Endothelial cell of umbilical vein (primary cell): ENCODE measurements at regions of chr2 and their contacts with region 1.

Region 1: DNA sequence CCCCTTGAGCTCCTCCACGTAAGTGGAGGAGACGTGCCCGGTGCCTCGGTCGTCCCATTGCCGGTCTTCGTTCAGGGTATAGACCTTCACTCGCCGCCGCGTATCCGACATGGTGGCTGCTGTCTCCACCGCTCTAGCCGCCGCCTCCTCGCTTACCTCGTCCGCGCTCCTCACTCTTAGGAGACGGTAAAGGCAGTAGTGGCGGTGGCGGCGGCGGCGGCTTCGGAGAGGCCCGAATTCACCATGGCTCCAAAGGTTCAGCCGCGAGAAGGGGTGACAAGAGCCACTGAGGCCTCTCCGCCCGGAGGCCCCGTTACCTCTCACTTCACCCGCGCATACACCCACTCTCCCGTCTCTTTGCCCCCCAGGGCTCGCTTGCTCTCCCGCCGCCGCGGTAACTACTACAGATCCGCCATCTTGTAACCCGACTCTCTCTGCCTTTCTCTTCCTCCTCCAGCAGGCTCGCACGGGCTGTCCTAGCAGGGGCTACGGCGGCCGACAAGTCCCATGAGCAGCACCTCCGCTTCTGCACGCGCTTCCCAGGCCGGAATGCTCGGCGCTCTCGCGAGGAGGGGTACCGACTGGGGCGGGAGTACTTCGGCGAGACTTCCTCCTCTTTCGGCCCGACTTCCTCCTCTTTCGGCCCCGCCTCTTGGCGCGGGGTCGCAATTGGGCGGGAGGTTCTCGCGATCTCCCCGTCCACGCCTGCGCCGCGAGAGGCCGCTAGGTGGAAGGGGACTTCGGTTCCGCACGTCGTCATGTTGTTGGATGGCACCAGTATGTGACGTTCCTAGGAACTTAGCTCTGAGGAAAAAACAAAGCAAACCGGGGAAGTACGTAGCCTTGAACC is at the start of gene PPP4R3B:
- DNase-seq: peak; percentile 100
- H3K4me3 ChIP-seq: peak within 1 kb of the TSS; percentile 64 to 98 (median 97)
- H3K27ac ChIP-seq: peak within 1 kb of the TSS; percentile 87
- H3K4me1 ChIP-seq: peaks cover 24% of the 10 kb centered on the region
- H3K27me3 ChIP-seq: no peaks in the 10 kb centered on the region
- CTCF ChIP-seq: peak; percentile 26 to 52
- POLR2A ChIP-seq: peak; percentile 59
- total RNA-seq, gene PPP4R3B: 49.0 and 51.5 TPM in 2 replicates

Region 2: DNA sequence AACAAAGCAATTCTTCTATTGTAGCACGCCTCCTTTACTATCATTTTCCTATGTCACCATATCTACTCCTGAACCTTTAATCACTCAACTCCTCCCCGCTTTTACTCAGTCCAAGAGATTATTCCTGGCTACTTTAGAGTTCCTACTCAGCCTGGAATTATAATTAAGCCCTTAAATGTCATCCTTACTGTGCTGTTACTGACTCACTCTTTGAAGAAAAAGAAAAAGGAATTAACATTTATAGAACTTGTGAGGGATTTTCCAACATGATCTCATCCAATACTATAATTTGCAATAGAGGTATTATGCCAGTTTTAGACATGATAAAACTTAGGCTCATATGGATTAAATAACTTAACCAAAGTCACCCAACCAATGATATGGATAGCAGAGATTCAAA is 259.5 kb before region 1 on chr2:
- CTCF ChIA-PET with region 1: no interaction called
- POLR2A ChIA-PET with region 1: no interaction called
- dilution Hi-C with region 1: no loop called
- intact Hi-C with region 1: no loop called
- DNase-seq: no peak
- H3K4me3 ChIP-seq: no peak overlapping the region
- H3K27ac ChIP-seq: no peak overlapping the region
- H3K4me1 ChIP-seq: no peaks in the 10 kb centered on the region
- H3K27me3 ChIP-seq: no peaks in the 10 kb centered on the region
- CTCF ChIP-seq: no peak
- POLR2A ChIP-seq: no peak

Region 3: DNA sequence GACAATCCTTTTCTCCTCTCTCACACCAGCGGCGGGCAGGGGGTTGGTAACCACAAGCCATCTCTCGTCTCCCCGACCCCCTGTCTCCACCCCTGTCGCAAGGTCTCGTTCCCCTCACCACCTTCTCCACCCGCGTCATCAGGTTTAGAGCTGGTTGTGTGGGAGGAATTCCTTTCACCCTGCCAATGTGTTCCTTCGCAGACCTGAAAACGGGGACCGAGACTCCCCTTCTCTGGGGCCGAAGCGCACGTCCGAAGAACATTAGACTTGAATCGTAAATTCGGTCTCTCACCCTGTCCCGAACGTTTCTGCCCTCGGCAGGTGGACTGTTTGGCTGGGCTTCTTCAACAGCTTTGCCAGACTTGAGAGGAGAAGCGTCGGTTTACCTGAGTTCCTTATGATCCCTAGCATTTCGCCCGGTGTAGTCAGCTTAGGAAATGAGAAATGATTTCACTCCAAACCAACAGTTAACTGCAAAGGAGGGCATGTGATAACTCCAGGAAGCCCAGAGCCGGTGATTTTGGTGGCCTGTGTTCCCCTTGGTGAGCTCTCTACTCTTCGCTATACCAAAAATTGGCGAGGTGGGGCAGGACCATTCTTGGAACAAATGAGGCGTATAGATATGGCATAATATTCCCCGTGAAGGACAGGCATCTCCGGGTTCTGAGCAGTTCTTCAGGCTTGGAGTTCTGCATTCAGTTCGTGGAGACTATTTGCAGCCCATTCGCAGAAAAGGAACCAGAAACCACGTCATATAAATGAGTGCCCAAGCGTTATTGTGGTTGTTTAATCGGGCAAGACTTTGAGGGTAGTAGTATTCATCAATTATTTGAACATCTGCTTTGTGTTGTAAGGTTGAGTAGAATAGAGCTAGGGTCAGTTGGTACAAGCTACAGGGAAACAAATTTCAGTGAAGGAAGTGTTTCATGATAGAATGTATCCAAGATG is 97.2 kb before region 1 on chr2:
- CTCF ChIA-PET with region 1: interaction called, 3 read pairs
- POLR2A ChIA-PET with region 1: no interaction called
- dilution Hi-C with region 1: no loop called
- intact Hi-C with region 1: loop called (anchors 1 kb)
- DNase-seq: peak; percentile 55
- H3K4me3 ChIP-seq: peak overlapping the region; percentile 61 to 91 (median 63)
- H3K27ac ChIP-seq: peak overlapping the region; percentile 21
- H3K4me1 ChIP-seq: peaks cover 4% of the 10 kb centered on the region
- H3K27me3 ChIP-seq: no peaks in the 10 kb centered on the region
- CTCF ChIP-seq: no peak
- POLR2A ChIP-seq: no peak

Region 4: DNA sequence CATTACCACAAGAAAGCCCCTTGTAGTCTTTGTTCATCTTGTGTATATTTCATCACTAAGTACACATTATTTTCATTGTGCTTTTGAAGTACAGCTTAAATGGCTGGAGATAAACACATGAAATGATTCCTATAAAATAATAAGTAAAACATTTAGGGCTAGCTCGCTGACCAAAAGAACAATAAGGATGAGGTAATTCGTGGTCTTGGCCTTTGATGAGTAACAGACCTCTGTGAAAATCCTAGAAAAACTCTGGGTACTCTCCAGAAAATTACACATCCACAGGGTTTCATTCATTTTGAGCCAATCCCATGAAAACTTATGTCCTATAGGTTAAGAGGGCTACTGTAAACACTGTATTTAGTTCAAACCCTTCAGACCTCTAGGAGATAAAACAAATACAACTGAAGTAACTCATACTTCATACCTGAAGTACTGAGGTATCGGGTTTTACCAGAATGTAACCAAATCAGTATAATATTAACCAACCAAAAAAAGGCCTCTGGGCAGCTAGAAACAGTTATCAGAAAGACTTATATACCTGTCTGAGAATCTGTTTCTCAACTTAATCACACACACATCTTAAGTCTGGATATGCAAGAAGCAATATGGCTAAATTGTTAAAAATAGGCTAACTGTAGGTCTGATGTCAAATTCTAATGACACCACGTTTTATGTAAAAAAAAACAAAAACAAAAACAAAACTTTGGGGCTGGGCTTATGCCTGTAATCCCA is 66.9 kb before region 1 on chr2:
- CTCF ChIA-PET with region 1: no interaction called
- POLR2A ChIA-PET with region 1: no interaction called
- dilution Hi-C with region 1: no loop called
- intact Hi-C with region 1: loop called (anchors 1 kb)
- DNase-seq: peak; percentile 84
- H3K4me3 ChIP-seq: no peak overlapping the region
- H3K27ac ChIP-seq: peak overlapping the region; percentile 75
- H3K4me1 ChIP-seq: peaks cover 13% of the 10 kb centered on the region
- H3K27me3 ChIP-seq: no peaks in the 10 kb centered on the region
- CTCF ChIP-seq: no peak
- POLR2A ChIP-seq: no peak

Region 5: DNA sequence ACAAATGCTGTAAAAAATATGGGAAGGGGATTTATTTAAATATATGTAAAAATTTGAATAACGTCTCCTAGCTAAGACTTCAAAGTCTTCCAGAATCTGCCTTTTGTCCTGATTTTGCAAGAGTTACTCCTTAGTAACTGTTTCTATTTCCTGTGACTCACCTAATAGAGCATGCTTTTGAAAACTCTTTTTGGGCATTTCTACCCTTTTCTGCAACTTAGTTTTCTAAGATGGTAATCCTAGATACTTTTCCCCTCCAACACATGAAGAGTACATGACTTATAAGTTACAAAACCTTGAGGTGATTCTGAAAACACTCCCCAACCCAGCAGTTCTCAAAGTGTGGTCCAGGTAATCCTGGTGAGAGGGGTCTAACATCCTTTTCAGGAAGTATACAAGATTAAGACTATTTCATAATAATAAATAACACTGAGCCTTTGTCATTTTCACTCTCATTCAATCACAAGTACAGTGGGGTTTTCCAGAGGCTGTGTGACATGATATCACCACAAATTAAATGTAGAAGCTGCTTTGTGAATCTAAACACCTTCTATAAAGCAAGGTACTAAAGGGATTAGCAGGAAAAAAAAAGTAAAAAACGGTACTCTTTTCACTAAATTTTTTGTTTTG is 31.8 kb before region 1 on chr2:
- CTCF ChIA-PET with region 1: interaction called, 3 read pairs
- POLR2A ChIA-PET with region 1: no interaction called
- dilution Hi-C with region 1: no loop called
- intact Hi-C with region 1: loop called (anchors 2 kb)
- DNase-seq: peak; percentile 53
- H3K4me3 ChIP-seq: peak overlapping the region in 1 of 3 experiments; percentile 8
- H3K27ac ChIP-seq: peak overlapping the region; percentile 85
- H3K4me1 ChIP-seq: peaks cover 21% of the 10 kb centered on the region
- H3K27me3 ChIP-seq: no peaks in the 10 kb centered on the region
- CTCF ChIP-seq: no peak
- POLR2A ChIP-seq: no peak

Region 6: DNA sequence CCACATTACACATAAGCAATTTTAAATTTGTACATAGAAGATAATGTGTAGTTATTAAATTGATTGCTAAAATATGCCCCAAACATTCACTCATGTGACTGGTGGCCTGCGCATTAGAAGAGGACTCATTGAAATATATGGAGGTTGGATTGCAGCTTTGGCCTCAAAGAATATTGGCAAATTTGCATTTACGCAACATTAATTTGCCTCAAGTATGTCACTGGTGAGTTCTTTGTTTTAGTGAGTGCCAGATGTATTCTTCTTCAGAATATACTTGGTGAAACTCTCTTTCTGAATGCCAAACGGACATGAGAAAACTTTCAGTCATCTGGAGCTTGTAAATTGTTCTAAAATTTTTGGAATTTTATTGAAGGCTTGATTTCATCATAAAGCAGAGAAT is 312.1 kb after region 1 on chr2:
- CTCF ChIA-PET with region 1: no interaction called
- POLR2A ChIA-PET with region 1: no interaction called
- dilution Hi-C with region 1: no loop called
- intact Hi-C with region 1: no loop called
- DNase-seq: no peak
- H3K4me3 ChIP-seq: no peak overlapping the region
- H3K27ac ChIP-seq: no peak overlapping the region
- H3K4me1 ChIP-seq: peaks cover 5% of the 10 kb centered on the region
- H3K27me3 ChIP-seq: no peaks in the 10 kb centered on the region
- CTCF ChIP-seq: no peak
- POLR2A ChIP-seq: no peak

Region 7: DNA sequence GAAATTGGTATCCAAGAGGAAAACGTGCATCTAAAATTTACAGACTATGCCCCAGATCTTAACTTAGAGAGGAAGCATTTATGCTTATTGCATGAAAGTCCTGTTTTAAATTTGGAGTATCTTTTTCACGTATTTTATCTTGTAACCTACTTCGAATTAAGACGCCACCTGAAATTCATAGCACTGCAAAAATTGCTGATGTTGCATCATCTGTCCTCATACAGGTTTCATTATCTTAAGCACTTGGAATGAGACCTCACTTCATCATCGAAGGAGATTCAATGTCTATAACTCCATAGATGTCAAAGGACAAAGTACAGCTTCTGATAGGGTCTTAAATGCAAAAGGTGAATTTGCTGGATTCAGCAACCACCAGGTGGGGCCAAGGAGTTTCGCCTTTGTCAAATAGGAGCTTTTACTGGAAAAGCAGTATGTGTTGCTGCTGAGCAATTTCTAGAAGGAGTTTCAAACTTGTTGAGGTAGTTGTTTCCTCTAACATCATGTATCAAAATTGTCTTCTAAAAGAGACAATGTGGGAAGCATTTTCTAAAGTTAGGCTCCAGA is 460.0 kb after region 1 on chr2:
- CTCF ChIA-PET with region 1: no interaction called
- POLR2A ChIA-PET with region 1: no interaction called
- dilution Hi-C with region 1: no loop called
- intact Hi-C with region 1: no loop called
- DNase-seq: peak; percentile 42
- H3K4me3 ChIP-seq: no peak overlapping the region
- H3K27ac ChIP-seq: no peak overlapping the region
- H3K4me1 ChIP-seq: no peaks in the 10 kb centered on the region
- H3K27me3 ChIP-seq: peaks cover 0 to 2% of the 10 kb centered on the region in 2 experiments
- CTCF ChIP-seq: peak; percentile 33 to 58
- POLR2A ChIP-seq: no peak